Activated CD4-positive, alpha-beta T cell treated with anti-CD3 and anti-CD28 coated beads for 36 hours (primary cell): ENCODE measurements at regions of chr9 and their contacts with region 1.

Region 1: GRCh38 chr9:128370826-128371621 is at the start of gene URM1:
- DNase-seq: peak; percentile 98
- ATAC-seq: peak; percentile 98
- H3K4me3 Mint-ChIP-seq: peak within 1 kb of the TSS; percentile 87
- H3K27ac Mint-ChIP-seq: peak within 1 kb of the TSS; percentile 89
- H3K4me1 Mint-ChIP-seq: peaks cover 27% of the 10 kb centered on the region
- H3K27me3 Mint-ChIP-seq: no peaks in the 10 kb centered on the region
- total RNA-seq, gene URM1: 39.9 to 56.1 TPM

Region 2: DNA sequence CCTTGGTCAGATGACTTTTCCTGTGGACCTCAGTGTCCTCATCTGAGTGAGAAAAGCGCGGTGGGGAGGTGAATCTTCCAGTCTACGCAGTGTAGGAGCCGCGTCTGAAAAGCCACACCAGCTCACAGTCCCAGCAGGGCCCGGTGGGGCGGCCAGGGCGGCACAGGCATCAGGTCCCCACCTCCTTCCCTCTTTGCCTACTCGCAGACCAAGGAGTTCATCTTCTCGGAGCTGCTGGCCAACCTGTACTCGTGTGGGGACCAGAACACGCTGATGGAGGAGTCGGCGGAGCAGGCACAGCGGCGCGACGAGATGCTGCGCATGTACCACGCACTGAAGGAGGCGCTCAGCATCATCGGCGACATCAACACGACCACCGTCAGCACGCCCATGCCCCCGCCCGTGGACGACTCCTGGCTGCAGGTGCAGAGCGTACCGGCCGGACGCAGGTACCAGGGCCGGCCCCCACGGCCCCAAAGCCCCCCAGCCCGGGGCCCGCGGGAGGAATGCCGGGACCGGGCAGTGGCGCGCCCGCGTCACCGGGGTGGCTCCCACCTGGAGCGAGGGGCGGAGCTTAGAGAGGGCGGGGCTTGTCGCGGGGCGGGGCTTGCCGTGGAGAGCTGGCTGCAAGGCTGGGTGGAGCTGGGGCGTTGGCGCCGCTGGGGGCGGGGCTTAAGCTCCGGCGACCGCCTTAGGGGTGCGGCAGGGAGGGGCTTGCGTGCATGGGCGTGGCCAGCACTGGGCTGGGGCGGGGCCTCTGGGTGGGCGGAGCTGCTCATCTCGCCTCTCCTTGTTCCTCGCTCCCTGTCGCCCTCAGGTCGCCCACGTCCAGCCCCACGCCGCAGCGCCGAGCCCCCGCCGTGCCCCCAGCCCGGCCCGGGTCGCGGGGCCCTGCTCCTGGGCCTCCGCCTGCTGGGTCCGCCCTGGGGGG is 120.9 kb before region 1 on chr9:
- CTCF ChIA-PET with region 1: no interaction called
- POLR2A ChIA-PET with region 1: no interaction called
- intact Hi-C with region 1: loop called in 1 of 2 experiments (anchors 1 kb)
- DNase-seq: peak; percentile 99
- ATAC-seq: peak; percentile 98
- H3K4me3 Mint-ChIP-seq: peak overlapping the region; percentile 78
- H3K27ac Mint-ChIP-seq: peak overlapping the region; percentile 42
- H3K4me1 Mint-ChIP-seq: peaks cover 7% of the 10 kb centered on the region
- H3K27me3 Mint-ChIP-seq: peaks cover 10% of the 10 kb centered on the region

Region 3: DNA sequence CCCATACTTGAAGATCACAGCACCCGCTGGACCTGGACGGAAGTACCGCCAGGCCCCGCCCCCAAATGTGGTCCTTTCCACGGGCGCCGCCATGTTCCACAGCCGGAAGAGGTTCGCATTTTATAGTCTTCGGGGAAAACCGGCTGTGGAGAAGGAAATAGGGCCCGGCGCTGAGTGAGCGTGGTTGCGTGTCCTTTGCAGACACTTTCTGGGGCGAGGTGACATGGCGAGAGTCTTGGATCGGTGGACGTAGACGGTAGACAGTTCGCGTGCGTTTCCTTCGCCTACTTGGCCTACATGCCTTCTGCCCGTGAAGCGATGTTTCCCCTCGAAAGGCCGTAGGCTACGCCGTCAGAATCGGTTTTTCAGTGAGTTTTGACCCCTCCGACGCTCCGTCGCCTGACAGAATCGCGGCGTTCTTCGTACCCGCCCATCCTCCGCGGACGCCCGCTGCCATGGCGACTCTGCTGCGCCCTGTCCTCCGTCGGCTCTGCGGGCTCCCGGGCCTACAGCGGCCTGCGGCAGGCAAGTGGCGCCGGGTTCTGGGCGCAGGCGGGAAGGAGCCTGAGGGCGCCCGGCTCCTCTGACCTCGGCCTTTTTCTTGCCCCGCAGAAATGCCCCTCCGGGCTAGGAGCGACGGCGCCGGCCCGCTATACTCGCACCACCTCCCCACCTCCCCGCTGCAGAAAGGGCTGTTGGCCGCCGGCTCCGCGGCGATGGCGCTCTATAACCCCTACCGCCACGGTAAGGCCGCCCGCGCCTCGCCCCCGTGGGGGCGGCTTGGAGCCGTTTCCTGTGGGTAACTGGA is 48.4 kb before region 1 on chr9 and contains the starts of genes COQ4 and TRUB2:
- CTCF ChIA-PET with region 1: interaction called, 4 read pairs
- POLR2A ChIA-PET with region 1: no interaction called
- intact Hi-C with region 1: loop called (anchors 1 kb)
- DNase-seq: peak; percentile 96
- ATAC-seq: peak; percentile 90
- H3K4me3 Mint-ChIP-seq: peak within 1 kb of the TSS; percentile 87
- H3K27ac Mint-ChIP-seq: peak within 1 kb of the TSS; percentile 93
- H3K4me1 Mint-ChIP-seq: peaks cover 19% of the 10 kb centered on the region
- H3K27me3 Mint-ChIP-seq: no peaks in the 10 kb centered on the region
- total RNA-seq, gene COQ4: 32.1 to 38.8 TPM
- total RNA-seq, gene TRUB2: 29.5 to 37.5 TPM

Region 4: GRCh38 chr9:128396970-128397613 is 26.1 kb after region 1 on chr9:
- CTCF ChIA-PET with region 1: no interaction called
- POLR2A ChIA-PET with region 1: no interaction called
- intact Hi-C with region 1: no loop called
- DNase-seq: no peak
- ATAC-seq: no peak
- H3K4me3 Mint-ChIP-seq: no peak overlapping the region
- H3K27ac Mint-ChIP-seq: no peak overlapping the region
- H3K4me1 Mint-ChIP-seq: no peaks in the 10 kb centered on the region
- H3K27me3 Mint-ChIP-seq: peaks cover 10% of the 10 kb centered on the region

Region 5: GRCh38 chr9:128504485-128505413 is 133.7 kb after region 1 on chr9 and contains the start of gene GLE1:
- CTCF ChIA-PET with region 1: no interaction called
- POLR2A ChIA-PET with region 1: no interaction called
- intact Hi-C with region 1: loop called in 1 of 2 experiments (anchors 1 kb)
- DNase-seq: peak; percentile 98
- ATAC-seq: peak; percentile 99
- H3K4me3 Mint-ChIP-seq: peak within 1 kb of the TSS; percentile 95
- H3K27ac Mint-ChIP-seq: peak within 1 kb of the TSS; percentile 99
- H3K4me1 Mint-ChIP-seq: peaks cover 21% of the 10 kb centered on the region
- H3K27me3 Mint-ChIP-seq: no peaks in the 10 kb centered on the region
- total RNA-seq, gene GLE1: 52.5 to 54.4 TPM

Region 6: GRCh38 chr9:128688512-128689292 is 317.7 kb after region 1 on chr9 and contains the start of gene SET:
- CTCF ChIA-PET with region 1: no interaction called
- POLR2A ChIA-PET with region 1: no interaction called
- intact Hi-C with region 1: loop called in 1 of 2 experiments (anchors 2 kb)
- DNase-seq: peak; percentile 96
- ATAC-seq: peak; percentile 71
- H3K4me3 Mint-ChIP-seq: peak within 1 kb of the TSS; percentile 99
- H3K27ac Mint-ChIP-seq: peak within 1 kb of the TSS; percentile 94
- H3K4me1 Mint-ChIP-seq: peaks cover 61% of the 10 kb centered on the region
- H3K27me3 Mint-ChIP-seq: no peaks in the 10 kb centered on the region
- total RNA-seq, gene SET: 673 to 682 TPM

Region 7: GRCh38 chr9:128947422-128948301 is 576.6 kb after region 1 on chr9 and contains the starts of genes DOLK and NUP188:
- CTCF ChIA-PET with region 1: no interaction called
- POLR2A ChIA-PET with region 1: no interaction called
- intact Hi-C with region 1: loop called in 1 of 2 experiments (anchors 5 kb)
- DNase-seq: peak; percentile 99
- ATAC-seq: peak; percentile 80
- H3K4me3 Mint-ChIP-seq: peak within 1 kb of the TSS; percentile 89
- H3K27ac Mint-ChIP-seq: peak within 1 kb of the TSS; percentile 95
- H3K4me1 Mint-ChIP-seq: peaks cover 29% of the 10 kb centered on the region
- H3K27me3 Mint-ChIP-seq: no peaks in the 10 kb centered on the region
- total RNA-seq, gene DOLK: 4.8 to 5.0 TPM
- total RNA-seq, gene NUP188: 102 to 124 TPM